ENCODE measurements at regions of chr12 and their contacts with region 1.

Region 1: DNA sequence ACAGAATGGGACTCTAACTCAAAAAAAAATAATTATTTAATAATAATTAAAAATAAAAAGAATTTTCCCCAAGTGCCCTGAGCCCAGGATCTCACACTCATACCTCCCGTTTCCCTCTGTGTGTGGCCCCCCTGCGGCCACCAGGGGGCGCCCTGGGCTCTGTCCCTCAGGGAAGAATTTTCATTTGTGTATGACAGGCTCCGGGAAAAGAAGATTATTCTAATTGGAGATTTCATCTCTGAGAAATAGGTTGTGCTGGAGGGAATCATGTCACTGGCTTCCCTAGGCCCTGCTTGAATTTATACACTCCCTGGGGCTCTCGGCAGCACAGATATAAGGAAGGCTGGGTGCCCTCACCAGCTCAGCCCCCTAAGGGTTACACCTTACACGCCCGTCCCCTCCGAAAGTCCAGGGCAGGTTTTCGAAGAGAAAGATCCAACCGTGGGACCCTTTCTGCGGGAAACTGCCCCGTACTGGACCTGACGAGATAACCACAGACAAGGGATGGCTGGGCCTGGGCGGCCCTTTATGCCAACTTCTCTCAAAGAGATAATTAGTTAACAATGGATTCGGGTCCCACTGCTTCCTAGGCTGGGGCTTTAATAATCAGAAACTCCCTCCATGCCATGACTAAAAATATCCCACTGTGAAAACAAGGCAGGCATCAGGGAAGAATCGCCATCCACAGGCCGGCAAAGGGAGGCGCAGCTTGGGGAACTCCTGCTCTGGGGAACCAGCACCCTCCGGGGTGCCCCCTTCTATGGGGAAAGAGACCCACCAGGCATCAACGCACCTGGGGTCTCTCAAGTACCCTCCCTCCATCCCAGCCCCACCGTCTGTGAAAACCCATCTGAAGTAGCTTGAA is 80.7 kb downstream of the KDM2B start:
- DNase-seq: peak; percentile 33
- H3K4me3 ChIP-seq: no peak overlapping the region
- H3K27ac ChIP-seq: no peak overlapping the region
- H3K27me3 ChIP-seq: no peaks in the 10 kb centered on the region
- CTCF ChIP-seq: peak; percentile 98

Region 2: DNA sequence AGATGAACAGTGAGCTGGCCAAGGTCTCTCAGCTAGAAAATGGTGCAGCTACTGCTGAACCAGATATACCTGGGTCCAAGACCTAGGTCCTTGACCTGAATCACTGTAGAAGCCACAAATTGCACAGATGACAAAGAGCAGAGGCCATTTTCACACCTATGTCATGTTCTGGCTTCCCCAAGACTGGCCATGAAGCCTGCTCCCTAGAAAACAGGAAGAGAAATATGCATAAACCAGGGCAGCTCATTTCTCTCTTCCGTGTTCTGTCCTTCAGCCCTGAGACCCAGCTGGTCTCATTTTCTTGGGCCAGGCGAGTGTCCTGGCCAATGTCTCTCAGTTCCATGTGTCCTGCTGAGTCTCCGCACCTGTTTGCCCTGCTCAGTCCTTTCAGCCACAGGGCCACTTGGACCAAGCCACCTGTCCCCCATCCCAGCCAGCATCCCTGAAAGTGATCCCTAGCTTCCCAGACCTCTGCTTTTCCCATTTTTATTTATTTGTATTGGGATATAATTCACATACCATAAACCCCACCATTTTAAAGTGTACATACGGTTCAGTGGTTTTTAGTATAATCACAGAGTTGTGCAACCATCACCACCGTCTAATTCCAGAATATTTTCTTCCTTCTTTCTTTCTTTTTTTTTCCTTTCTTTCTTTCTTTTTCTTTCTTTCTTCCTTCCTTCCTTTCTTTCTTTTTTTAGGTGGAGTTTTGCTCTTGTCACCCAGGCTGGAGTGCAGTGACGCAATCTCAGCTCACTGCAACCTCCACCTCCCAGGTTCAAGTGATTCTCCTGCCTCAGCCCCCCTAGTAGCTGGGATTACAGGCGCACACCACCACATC is 340.5 kb before region 1 on chr12:
- CTCF ChIA-PET with region 1: no interaction called
- POLR2A ChIA-PET with region 1: no interaction called
- DNase-seq: no peak
- H3K4me3 ChIP-seq: no peak overlapping the region
- H3K27ac ChIP-seq: no peak overlapping the region
- H3K27me3 ChIP-seq: peaks cover 25% of the 10 kb centered on the region
- CTCF ChIP-seq: no peak

Region 3: DNA sequence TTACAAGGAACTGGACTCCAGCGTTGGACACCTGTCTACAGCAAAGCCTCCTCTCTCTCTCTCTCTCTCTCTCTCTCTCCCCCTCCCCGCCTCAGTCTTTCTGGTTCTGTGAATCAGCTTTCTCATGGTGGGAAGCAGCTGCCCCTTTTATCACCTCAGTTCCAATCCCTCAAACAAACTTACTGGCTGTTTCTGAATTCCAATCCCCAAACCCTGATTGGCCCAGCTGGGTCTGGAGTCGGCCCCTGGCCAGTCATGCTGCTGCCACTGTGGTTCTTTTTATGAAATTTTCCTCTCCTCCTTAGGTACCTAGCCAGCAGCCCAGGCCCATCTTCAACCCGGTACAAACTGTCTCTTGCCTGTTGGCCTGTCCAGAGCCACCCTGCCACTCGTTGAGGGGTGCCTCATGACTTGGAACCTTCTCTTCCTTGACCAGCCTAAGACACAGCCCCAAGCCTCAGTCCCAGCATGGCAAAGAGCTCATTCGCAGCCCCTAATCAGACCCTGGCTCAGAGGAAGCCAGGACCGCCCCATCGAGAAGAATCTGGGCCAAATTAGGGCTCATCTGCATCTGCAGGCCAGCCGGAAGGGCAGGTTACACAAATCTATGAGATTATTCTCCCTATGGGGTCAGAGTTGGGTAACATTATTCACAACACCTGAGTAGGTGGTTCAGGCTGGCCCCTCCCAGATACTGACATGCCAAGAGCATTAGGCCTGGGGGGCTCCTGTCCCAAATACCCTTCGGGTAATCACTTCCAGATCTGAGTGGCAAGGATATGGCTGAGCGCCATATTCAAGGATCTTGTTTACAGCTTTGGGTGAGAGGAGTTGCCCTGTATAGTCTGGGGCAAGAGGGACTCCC is 178.8 kb after region 1 on chr12:
- CTCF ChIA-PET with region 1: interaction called, 23 read pairs
- POLR2A ChIA-PET with region 1: no interaction called
- DNase-seq: no peak
- H3K4me3 ChIP-seq: no peak overlapping the region
- H3K27ac ChIP-seq: no peak overlapping the region
- H3K27me3 ChIP-seq: no peaks in the 10 kb centered on the region
- CTCF ChIP-seq: no peak